Spleen (tissue), 13 donors: ENCODE measurements at regions of chr10 and their contacts with region 1.

Region 1: DNA sequence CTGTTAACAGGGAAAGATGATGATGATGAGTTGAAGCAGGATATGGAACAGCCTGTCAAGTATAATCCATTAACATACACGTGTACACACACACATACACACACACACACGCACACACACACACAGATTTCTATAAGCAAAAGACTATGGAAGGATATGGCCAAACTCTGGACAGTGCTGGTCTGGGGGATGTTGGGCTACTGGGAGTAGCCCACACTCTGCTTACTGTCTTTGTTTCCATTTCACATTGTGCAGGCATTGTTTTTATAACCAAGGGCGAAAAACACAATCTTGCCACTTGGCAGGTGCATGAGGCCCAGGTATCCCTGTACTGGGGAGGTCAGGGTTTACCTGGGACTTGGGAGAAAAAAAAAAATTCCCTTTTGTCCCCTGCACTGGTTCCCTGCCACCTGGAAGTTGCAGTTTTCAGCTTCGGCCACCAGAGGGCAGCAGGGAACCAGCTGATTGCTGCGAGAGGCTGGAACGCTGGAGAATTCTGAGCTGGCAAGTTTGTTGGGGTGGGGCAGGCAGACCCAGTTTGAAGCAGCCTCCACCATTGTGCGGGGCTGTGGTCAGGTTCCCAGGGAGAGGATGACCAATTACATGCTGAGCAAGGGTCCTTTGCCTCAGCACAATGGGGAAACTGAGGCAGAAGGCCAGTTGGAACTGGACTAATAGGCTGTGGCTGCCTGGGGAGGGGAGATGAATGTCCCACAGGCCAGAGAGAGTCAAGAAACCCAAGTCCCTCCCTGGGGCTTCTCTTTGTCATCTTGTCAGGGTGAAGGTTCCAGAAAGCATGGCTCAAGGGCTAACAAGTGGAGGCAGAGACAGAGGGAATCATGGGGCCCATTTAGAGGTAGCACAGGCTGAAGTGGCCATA is 27.3 kb downstream of the PPIF start:
- DNase-seq: peak; percentile 93
- H3K4me3 ChIP-seq: no peak overlapping the region
- H3K27ac ChIP-seq: no peak overlapping the region
- H3K4me1 ChIP-seq: peaks cover 0 to 12% (median 5%) of the 10 kb centered on the region in 6 donors
- H3K27me3 ChIP-seq: no peaks in the 10 kb centered on the region
- CTCF ChIP-seq: peak; percentile 82 to 99 (median 97)
- POLR2A ChIP-seq: no peak

Region 2: DNA sequence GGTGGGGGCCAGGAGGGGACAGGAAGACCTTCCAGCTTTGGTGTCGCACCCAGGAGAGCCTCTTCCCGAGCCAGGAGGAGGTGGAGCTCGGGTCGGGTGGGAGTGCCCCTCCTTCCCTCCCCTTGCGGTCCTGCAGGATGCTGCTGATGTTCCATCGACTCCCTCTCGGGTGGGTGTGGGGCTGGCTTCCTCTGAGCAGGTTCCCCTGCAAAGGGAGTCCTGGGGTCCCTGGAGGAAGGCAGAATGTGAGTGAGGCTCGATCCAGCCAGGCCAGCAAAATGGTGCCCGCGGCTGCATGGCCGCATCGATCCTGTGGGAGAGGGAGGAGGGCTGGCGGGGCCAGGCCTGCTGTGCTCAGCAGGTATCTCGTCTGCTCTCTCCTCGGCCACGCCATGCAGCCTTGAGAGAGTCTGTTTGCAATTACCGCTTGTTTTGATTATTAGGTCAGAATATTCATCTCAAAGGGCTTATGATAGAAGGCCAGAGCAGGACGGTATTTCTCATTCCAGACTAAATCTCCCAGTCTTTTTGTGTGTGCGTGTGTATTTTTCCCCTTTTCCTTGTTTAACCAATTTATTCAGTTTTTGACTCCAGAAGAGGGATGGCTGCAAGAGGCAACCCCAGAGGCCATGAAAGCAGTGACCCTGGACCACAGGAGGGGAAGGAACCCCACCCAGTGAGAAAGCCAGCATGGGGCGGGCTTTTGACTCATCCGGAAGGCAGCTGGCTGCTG is 443.1 kb before region 1 on chr10:
- intact Hi-C with region 1: no loop called
- DNase-seq: peak; percentile 77
- H3K4me3 ChIP-seq: no peak overlapping the region
- H3K27ac ChIP-seq: peak overlapping the region in 6 of 8 donors; percentile 45 to 79 (median 69)
- H3K4me1 ChIP-seq: peaks cover 0 to 43% (median 15%) of the 10 kb centered on the region in 6 donors
- H3K27me3 ChIP-seq: no peaks in the 10 kb centered on the region
- CTCF ChIP-seq: no peak
- POLR2A ChIP-seq: no peak

Region 3: GRCh38 chr10:79468024-79468560 is 93.5 kb after region 1 on chr10:
- intact Hi-C with region 1: loop called (anchors 5 kb)
- DNase-seq: no peak
- H3K4me3 ChIP-seq: no peak overlapping the region
- H3K27ac ChIP-seq: peak overlapping the region in 2 of 8 donors; percentile 36 to 41
- H3K4me1 ChIP-seq: peaks cover 0 to 21% (median 5%) of the 10 kb centered on the region in 6 donors
- H3K27me3 ChIP-seq: peaks cover 0 to 3% (median 0%) of the 10 kb centered on the region in 7 donors
- CTCF ChIP-seq: no peak
- POLR2A ChIP-seq: no peak

Region 4: GRCh38 chr10:79483948-79484347 is 109.4 kb after region 1 on chr10:
- intact Hi-C with region 1: loop called (anchors 5 kb)
- DNase-seq: no peak
- H3K4me3 ChIP-seq: no peak overlapping the region
- H3K27ac ChIP-seq: peak overlapping the region in 4 of 8 donors; percentile 16 to 61 (median 50)
- H3K4me1 ChIP-seq: peaks cover 0 to 17% (median 2%) of the 10 kb centered on the region in 6 donors
- H3K27me3 ChIP-seq: peaks cover 0 to 1% (median 0%) of the 10 kb centered on the region in 7 donors
- CTCF ChIP-seq: no peak
- POLR2A ChIP-seq: no peak